ENCODE measurements at regions of chr19 and their contacts with region 1.

Region 1: GRCh38 chr19:18279516-18280273 is 1.7 kb downstream of the JUND start:
- DNase-seq: peak; percentile 94
- H3K4me3 ChIP-seq: peak overlapping the region; percentile 83 to 100 (median 93)
- H3K27ac ChIP-seq: peak overlapping the region; percentile 97 to 100 (median 100)
- H3K4me1 ChIP-seq: peaks cover 37 to 63% (median 52%) of the 10 kb centered on the region in 4 donors
- H3K27me3 ChIP-seq: no peaks in the 10 kb centered on the region
- CTCF ChIP-seq: peak; percentile 65 to 96 (median 85)
- EP300 ChIP-seq: no peak
- POLR2A ChIP-seq: peak; percentile 93

Region 2: DNA sequence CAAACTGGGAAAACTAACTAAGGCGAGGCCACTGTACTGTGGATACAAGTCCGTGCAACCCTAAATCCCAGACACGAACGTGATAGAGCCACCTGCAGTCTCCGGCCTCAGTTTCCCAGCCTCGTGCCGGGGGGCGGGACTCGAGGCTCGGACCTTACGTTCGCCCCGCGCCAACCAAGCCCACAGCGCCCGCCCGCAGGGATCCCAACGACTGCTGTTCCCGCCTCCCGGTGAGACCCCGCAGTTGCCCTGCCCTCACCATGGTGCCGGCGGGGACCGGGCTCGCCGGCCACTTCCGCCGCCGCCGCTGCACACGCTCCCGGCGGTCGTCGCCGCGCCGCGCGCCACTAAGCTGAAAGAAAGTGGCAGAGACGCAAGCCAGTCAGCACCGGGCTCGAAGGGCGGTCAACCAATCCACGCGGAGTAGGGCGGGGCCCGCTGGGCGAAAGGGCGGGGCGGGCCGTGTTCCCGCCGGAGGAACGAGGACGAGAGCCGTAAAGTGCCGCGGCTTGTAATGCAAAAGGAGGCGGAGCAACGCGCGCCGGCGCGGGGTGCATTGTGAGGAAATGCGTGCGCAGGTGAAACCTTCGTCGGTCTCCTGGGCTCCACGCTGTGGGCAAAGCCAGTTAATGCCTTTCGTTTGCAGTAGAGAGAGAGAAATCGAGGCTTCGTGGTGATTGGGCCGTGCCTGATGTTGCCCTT is 43.2 kb after region 1 on chr19 and contains the start of gene LSM4:
- in situ Hi-C with region 1: loop called (anchors 5 to 10 kb)
- intact Hi-C with region 1: loop called (anchors 5 kb)
- DNase-seq: peak; percentile 100
- H3K4me3 ChIP-seq: peak within 1 kb of the TSS; percentile 55 to 78 (median 68)
- H3K27ac ChIP-seq: peak within 1 kb of the TSS; percentile 95 to 98 (median 97)
- H3K4me1 ChIP-seq: peaks cover 41 to 60% (median 54%) of the 10 kb centered on the region in 4 donors
- H3K27me3 ChIP-seq: no peaks in the 10 kb centered on the region
- CTCF ChIP-seq: peak in 2 of 5 experiments; percentile 26 to 51
- EP300 ChIP-seq: no peak
- POLR2A ChIP-seq: peak; percentile 93
- total RNA-seq, gene LSM4: 94.3 to 218 (median 175) TPM

Region 3: GRCh38 chr19:18328340-18329034 is 48.8 kb after region 1 on chr19:
- in situ Hi-C with region 1: loop called (anchors 5 to 10 kb)
- intact Hi-C with region 1: loop called (anchors 5 kb)
- DNase-seq: peak; percentile 94
- H3K4me3 ChIP-seq: peak overlapping the region in 2 of 4 donors; percentile 18 to 34
- H3K27ac ChIP-seq: peak overlapping the region; percentile 74 to 86 (median 80)
- H3K4me1 ChIP-seq: peaks cover 15 to 30% (median 18%) of the 10 kb centered on the region in 4 donors
- H3K27me3 ChIP-seq: no peaks in the 10 kb centered on the region
- CTCF ChIP-seq: peak; percentile 86 to 100 (median 93)
- EP300 ChIP-seq: no peak
- POLR2A ChIP-seq: no peak

Region 4: DNA sequence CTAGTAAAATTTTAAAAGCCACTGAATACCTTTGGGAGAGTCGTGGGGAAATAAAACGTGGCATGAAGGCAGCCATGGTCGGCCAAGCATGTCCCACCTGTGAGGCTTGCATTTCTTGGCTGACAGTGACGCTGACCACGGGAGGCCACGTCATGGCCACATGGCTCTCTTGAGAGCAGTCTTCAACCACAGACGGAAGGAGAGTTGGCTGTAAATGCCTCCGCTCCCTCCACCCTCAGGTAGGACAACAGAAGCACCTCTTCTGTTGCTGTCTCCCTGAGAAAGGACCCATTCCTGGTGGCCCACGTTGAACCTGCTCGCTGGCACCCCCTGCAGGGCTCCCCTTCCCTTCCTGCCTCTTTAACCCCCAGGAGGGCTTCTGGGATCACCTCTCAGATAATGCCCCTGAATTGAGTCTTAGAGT is 128.4 kb after region 1 on chr19:
- in situ Hi-C with region 1: loop called in 2 of 4 experiments (anchors 5 to 25 kb)
- intact Hi-C with region 1: no loop called
- DNase-seq: peak; percentile 72
- H3K4me3 ChIP-seq: no peak overlapping the region
- H3K27ac ChIP-seq: peak overlapping the region in 2 of 4 donors; percentile 26 to 41
- H3K4me1 ChIP-seq: peaks cover 0 to 18% (median 14%) of the 10 kb centered on the region in 4 donors
- H3K27me3 ChIP-seq: no peaks in the 10 kb centered on the region
- CTCF ChIP-seq: peak; percentile 33 to 66 (median 62)
- EP300 ChIP-seq: no peak
- POLR2A ChIP-seq: no peak

Measured in transverse colon (tissue), 4 donors.